ENCODE measurements at regions of chr18 and their contacts with region 1.

Region 1: DNA sequence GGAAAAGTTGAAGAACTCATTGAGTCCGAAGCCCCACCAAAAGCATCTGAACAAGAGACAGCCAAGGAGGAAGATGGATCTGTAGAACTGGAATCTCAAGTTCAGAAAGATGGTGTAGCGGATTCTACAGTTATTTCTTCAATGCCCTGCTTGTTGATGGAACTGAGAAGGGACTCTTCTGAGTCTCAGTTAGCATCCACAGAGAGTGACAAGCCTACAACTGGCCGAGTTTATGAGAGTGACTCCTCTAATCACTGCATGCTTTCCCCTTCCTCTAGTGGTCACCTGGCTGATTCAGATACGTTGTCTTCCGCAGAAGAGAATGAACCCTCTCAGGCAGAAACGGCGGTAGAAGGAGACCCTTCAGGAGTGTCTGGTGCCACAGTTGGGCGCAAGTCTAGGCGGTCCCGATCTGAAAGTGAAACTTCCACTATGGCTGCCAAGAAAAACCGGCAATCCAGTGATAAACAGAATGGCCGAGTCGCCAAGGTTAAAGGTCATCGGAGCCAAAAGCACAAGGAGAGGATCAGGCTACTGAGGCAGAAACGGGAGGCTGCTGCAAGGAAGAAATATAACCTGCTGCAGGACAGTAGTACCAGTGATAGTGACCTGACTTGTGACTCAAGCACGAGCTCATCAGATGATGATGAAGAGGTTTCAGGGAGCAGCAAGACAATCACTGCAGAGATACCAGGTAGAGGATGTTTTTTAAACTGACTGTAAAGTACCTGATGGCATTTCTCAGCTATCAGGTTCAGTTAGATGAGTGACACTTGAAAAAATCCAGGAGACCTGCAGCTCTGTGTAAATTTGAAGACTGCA is 111.9 kb downstream of the HAUS1 start:
- DNase-seq: no peak
- H3K4me3 ChIP-seq: no peak overlapping the region
- H3K27ac ChIP-seq: no peak overlapping the region
- H3K4me1 ChIP-seq: peaks cover 9% of the 10 kb centered on the region
- H3K27me3 ChIP-seq: no peaks in the 10 kb centered on the region
- CTCF ChIP-seq: no peak
- POLR2A ChIP-seq: no peak

Region 2: GRCh38 chr18:45008694-45009413 is 1207.3 kb before region 1 on chr18:
- intact Hi-C with region 1: loop called (anchors 5 kb)
- DNase-seq: no peak
- H3K4me3 ChIP-seq: no peak overlapping the region
- H3K27ac ChIP-seq: no peak overlapping the region
- H3K4me1 ChIP-seq: peaks cover 21% of the 10 kb centered on the region
- H3K27me3 ChIP-seq: no peaks in the 10 kb centered on the region
- CTCF ChIP-seq: no peak
- POLR2A ChIP-seq: no peak

Measured in vagina (tissue), 2 donors.